ENCODE measurements at regions of chr1 and their contacts with region 1.

Region 1: DNA sequence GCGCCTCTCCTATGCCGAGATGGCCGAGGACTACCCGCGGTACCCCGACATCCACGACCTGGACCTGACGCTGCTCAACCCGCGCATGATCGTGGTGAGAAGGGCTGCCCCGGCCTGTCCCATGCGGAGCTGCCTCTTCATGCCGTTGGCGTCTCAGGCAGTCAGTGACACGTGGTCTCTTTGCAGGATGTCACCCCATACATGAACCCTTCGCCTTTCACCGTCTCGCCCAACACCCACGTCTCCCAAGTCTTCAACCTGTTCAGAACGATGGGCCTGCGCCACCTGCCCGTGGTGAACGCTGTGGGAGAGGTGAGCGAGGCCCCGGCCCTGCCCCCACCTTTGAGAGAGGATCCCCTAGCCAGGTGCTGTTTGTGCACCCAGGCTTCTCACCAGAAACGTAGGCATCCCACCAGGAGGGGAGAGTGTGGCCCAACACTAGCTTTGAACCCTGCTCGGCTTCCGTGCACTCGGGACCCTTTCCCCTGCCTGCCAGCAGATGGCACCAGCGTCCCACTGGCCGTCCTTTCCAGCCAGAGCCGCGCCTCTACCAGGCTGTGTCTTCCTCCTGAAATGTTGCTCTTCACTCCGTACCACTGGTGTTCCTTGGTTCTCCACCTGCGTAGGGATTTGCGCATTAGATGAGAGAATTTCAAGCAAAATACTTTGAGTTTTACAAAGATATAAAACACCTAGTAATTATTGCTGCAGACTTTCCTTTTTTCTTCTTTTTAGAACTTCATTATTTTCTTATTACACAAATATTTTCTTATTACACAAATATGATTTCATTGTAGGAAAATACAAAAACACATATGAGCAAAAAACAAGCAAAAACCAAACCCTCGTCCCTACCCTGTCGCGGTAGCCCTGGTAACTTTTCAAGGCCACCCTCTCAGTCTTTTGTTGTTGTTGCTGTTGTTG is 9.0 kb downstream of the NPPA start:
- DNase-seq: peak; percentile 59 to 79 (median 73)
- ATAC-seq: peak; percentile 93
- H3K4me3 ChIP-seq: no peak overlapping the region
- H3K4me3 Mint-ChIP-seq: no peak overlapping the region
- H3K27ac ChIP-seq: no peak overlapping the region
- H3K27ac Mint-ChIP-seq: peak overlapping the region in 1 of 9 donors; percentile 29
- H3K4me1 ChIP-seq: no peaks in the 10 kb centered on the region
- H3K4me1 Mint-ChIP-seq: peaks cover 0 to 8% (median 4%) of the 10 kb centered on the region in 7 donors
- H3K27me3 ChIP-seq: no peaks in the 10 kb centered on the region
- H3K27me3 Mint-ChIP-seq: no peaks in the 10 kb centered on the region

Region 2: DNA sequence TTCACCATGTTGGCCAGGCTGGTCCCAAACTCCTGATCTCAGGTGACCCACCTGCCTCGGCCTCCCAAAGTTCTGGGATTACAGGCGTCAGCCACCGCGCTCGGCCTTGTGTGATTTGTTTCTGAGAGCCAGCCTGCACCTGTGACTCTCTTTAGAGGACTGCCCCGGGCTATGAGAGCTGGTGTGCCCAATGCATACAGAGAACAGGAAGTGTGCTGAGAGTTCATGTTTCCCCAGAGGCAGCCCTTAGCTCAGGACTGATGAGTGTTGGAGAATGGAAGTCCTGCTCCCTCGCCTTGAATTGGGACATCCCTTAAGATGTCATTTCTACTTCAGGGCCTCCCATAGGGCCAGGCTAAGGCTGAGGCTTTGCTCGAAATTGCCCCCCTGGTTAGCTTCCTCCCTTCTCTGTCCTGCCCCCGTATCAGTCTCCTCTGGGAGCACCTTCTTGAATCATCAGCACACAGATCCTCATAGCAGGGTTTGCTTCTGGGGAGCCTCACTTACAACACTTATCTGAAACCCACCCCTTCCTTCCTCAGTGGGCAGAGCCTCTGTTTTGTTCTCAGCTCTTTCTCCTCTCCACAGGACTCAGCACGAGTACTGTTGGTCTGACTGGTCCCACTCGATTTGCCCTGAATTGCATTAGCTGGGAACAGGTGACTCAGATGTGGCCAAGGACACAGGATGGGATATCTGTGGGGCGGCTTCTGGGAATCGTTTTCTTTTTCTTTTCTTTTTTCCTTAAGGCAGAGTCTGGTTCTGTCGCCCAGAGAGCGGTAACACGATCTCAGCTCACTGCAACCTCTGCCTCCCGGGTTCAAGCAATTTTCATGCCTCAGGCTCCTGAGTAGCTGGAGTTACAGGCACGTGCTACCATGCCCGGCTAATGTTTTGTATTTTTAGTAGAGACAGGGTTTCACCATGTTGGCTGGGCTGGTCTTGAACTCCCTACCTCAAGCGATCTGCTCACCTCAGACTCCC is 485.5 kb before region 1 on chr1:
- CTCF ChIA-PET with region 1: no interaction called
- POLR2A ChIA-PET with region 1: no interaction called
- intact Hi-C with region 1: no loop called
- DNase-seq: peak in 1 of 9 donors; percentile 16
- ATAC-seq: no peak
- H3K4me3 ChIP-seq: no peak overlapping the region
- H3K4me3 Mint-ChIP-seq: peak overlapping the region in 5 of 10 donors; percentile 3 to 54 (median 30)
- H3K27ac ChIP-seq: no peak overlapping the region
- H3K27ac Mint-ChIP-seq: peak overlapping the region in 5 of 9 donors; percentile 27 to 59 (median 37)
- H3K4me1 ChIP-seq: peaks cover 0 to 5% of the 10 kb centered on the region in 2 donors
- H3K4me1 Mint-ChIP-seq: peaks cover 0 to 39% (median 16%) of the 10 kb centered on the region in 7 donors
- H3K27me3 ChIP-seq: no peaks in the 10 kb centered on the region
- H3K27me3 Mint-ChIP-seq: peaks cover 6 to 31% (median 16%) of the 10 kb centered on the region in 5 donors

Region 3: GRCh38 chr1:11822096-11822495 is 16.5 kb before region 1 on chr1:
- CTCF ChIA-PET with region 1: no interaction called
- POLR2A ChIA-PET with region 1: no interaction called
- intact Hi-C with region 1: no loop called
- DNase-seq: no peak
- ATAC-seq: no peak
- H3K4me3 ChIP-seq: no peak overlapping the region
- H3K4me3 Mint-ChIP-seq: no peak overlapping the region
- H3K27ac ChIP-seq: no peak overlapping the region
- H3K27ac Mint-ChIP-seq: no peak overlapping the region
- H3K4me1 ChIP-seq: no peaks in the 10 kb centered on the region
- H3K4me1 Mint-ChIP-seq: peaks cover 0 to 1% (median 0%) of the 10 kb centered on the region in 7 donors
- H3K27me3 ChIP-seq: no peaks in the 10 kb centered on the region
- H3K27me3 Mint-ChIP-seq: no peaks in the 10 kb centered on the region

Region 4: DNA sequence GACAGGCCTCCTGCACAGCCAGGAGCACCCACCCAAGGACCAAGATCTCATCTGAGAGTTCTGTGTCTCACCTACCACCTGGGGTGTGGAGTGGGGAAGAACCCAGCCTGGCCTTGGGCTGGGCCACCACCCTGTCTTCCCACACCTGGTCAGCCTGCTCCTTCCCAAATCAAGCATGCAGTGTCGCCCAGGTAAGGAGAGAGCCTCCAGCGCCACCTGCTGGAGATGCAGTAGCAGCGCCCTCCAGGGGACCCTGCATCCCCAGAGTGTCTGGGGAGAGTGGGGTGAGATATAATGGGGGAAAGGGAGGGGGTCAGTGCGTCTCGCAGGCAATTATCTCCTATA is 55.3 kb after region 1 on chr1:
- CTCF ChIA-PET with region 1: interaction called, 4 read pairs
- POLR2A ChIA-PET with region 1: no interaction called
- intact Hi-C with region 1: loop called (anchors 1 kb)
- DNase-seq: peak; percentile 41 to 77 (median 61)
- ATAC-seq: peak; percentile 91
- H3K4me3 ChIP-seq: no peak overlapping the region
- H3K4me3 Mint-ChIP-seq: peak overlapping the region in 1 of 10 donors; percentile 2
- H3K27ac ChIP-seq: no peak overlapping the region
- H3K27ac Mint-ChIP-seq: peak overlapping the region in 2 of 9 donors; percentile 25 to 54
- H3K4me1 ChIP-seq: no peaks in the 10 kb centered on the region
- H3K4me1 Mint-ChIP-seq: peaks cover 0 to 4% (median 0%) of the 10 kb centered on the region in 7 donors
- H3K27me3 ChIP-seq: peaks cover 0 to 4% of the 10 kb centered on the region in 2 donors
- H3K27me3 Mint-ChIP-seq: peaks cover 20 to 49% (median 31%) of the 10 kb centered on the region in 5 donors

Region 5: DNA sequence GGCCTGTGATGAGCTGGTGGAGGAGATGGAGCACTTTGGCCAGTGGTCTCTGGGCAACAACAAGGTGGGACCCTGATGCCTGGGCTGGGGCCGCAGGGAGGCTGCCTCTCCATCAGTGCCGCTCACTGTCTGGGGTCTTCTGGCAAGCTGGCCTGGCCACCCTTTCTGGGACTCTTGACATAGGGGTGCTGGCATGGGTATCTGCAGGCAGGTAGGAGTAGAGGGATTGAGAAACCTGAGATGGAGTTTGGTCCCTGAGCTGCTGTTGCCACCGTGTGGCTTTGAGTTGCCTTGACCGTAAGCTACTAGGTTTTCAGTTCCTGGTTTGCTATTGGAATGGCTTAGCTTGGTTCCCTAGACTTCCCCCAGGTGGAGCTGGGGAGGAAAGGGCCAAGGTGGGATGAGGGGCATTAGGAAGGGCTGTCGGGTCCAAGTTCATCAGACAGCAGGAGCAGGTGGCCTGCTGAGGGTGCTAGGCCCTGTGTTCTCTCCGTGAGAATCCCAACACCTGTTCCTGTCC is 128.5 kb after region 1 on chr1:
- CTCF ChIA-PET with region 1: no interaction called
- POLR2A ChIA-PET with region 1: no interaction called
- intact Hi-C with region 1: loop called in 1 of 2 experiments (anchors 1 kb)
- DNase-seq: peak in 1 of 9 donors; percentile 14
- ATAC-seq: peak; percentile 42
- H3K4me3 ChIP-seq: no peak overlapping the region
- H3K4me3 Mint-ChIP-seq: no peak overlapping the region
- H3K27ac ChIP-seq: no peak overlapping the region
- H3K27ac Mint-ChIP-seq: peak overlapping the region in 1 of 9 donors; percentile 30
- H3K4me1 ChIP-seq: no peaks in the 10 kb centered on the region
- H3K4me1 Mint-ChIP-seq: peaks cover 0 to 8% (median 0%) of the 10 kb centered on the region in 7 donors
- H3K27me3 ChIP-seq: no peaks in the 10 kb centered on the region
- H3K27me3 Mint-ChIP-seq: no peaks in the 10 kb centered on the region

Region 6: GRCh38 chr1:11979851-11980675 is 141.5 kb after region 1 on chr1 and contains the start of gene MFN2:
- CTCF ChIA-PET with region 1: no interaction called
- POLR2A ChIA-PET with region 1: no interaction called
- intact Hi-C with region 1: loop called in 1 of 2 experiments (anchors 1 kb)
- DNase-seq: peak; percentile 89 to 97 (median 94)
- ATAC-seq: peak; percentile 94
- H3K4me3 ChIP-seq: peak within 1 kb of the TSS; percentile 88
- H3K4me3 Mint-ChIP-seq: peak within 1 kb of the TSS; percentile 86 to 99 (median 92)
- H3K27ac ChIP-seq: peak within 1 kb of the TSS; percentile 98
- H3K27ac Mint-ChIP-seq: peak within 1 kb of the TSS; percentile 85 to 98 (median 94)
- H3K4me1 ChIP-seq: peaks cover 9 to 22% of the 10 kb centered on the region in 2 donors
- H3K4me1 Mint-ChIP-seq: peaks cover 33 to 46% (median 41%) of the 10 kb centered on the region in 7 donors
- H3K27me3 ChIP-seq: no peaks in the 10 kb centered on the region
- H3K27me3 Mint-ChIP-seq: no peaks in the 10 kb centered on the region
- total RNA-seq, gene MFN2: 40.2 to 58.6 (median 44.8) TPM

Region 7: DNA sequence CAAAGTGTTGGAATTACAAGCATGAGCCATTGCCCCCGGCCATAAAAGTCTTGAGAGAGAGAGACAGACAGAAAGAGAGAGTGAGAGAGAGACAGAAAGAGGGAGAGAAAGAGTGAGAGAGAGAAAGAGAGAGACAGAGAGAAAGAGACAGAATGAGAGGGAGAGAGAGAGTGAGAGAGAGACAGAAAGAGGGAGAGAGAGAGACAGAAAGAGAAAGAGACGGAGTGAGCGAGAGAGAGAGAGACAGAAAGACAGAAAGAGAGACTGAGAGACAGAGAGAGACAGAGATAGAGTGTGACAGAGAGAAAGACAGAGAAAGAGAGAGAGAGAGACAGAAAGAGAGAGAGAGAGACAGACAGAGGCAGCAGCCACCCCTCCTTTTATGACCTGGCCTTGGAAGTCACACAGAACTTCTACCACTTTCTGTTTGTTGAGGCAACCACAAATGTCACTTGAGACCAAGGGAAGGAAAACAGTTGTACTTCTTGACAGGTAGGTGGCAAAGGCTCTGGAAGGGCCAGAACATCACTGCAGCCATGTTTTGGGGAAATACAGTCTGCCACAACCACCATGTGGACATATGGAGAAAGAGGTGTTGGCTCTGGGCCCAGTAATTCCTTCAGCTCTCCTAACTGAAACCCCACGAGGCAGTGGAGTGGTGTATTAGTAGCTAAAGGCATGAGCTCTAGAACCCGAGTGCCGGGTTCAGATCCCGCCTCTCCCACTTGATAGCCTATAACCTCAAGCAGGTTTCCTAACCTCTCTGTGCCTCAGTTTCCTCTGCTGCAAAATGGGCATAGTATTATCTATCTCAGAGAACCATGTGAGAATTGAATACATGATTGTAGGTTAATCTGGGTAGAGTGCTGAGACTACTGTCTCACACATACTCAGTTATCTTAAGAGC is 275.1 kb after region 1 on chr1:
- CTCF ChIA-PET with region 1: no interaction called
- POLR2A ChIA-PET with region 1: no interaction called
- intact Hi-C with region 1: loop called in 1 of 2 experiments (anchors 2 kb)
- DNase-seq: no peak
- ATAC-seq: no peak
- H3K4me3 ChIP-seq: no peak overlapping the region
- H3K4me3 Mint-ChIP-seq: peak overlapping the region in 1 of 10 donors; percentile 7
- H3K27ac ChIP-seq: no peak overlapping the region
- H3K27ac Mint-ChIP-seq: peak overlapping the region in 2 of 9 donors; percentile 30 to 78
- H3K4me1 ChIP-seq: no peaks in the 10 kb centered on the region
- H3K4me1 Mint-ChIP-seq: peaks cover 0 to 27% (median 4%) of the 10 kb centered on the region in 7 donors
- H3K27me3 ChIP-seq: no peaks in the 10 kb centered on the region
- H3K27me3 Mint-ChIP-seq: no peaks in the 10 kb centered on the region